ENCODE measurements at regions of chr14 and their contacts with region 1.

Region 1: GRCh38 chr14:71050204-71050823 is 143.1 kb downstream of the PCNX1 start:
- DNase-seq: no peak
- ATAC-seq: no peak
- H3K4me3 ChIP-seq: no peak overlapping the region
- H3K4me3 Mint-ChIP-seq: no peak overlapping the region
- H3K27ac ChIP-seq: no peak overlapping the region
- H3K27ac Mint-ChIP-seq: no peak overlapping the region
- H3K4me1 ChIP-seq: no peaks in the 10 kb centered on the region
- H3K4me1 Mint-ChIP-seq: peaks cover 2% of the 10 kb centered on the region
- H3K27me3 ChIP-seq: no peaks in the 10 kb centered on the region
- H3K27me3 Mint-ChIP-seq: no peaks in the 10 kb centered on the region
- CTCF ChIP-seq: peak; percentile 78

Region 2: GRCh38 chr14:71089971-71090370 is 39.7 kb after region 1 on chr14:
- CTCF ChIA-PET with region 1: no interaction called
- POLR2A ChIA-PET with region 1: no interaction called
- intact Hi-C with region 1: loop called (anchors 1 kb)
- DNase-seq: no peak
- ATAC-seq: no peak
- H3K4me3 ChIP-seq: no peak overlapping the region
- H3K4me3 Mint-ChIP-seq: no peak overlapping the region
- H3K27ac ChIP-seq: no peak overlapping the region
- H3K27ac Mint-ChIP-seq: no peak overlapping the region
- H3K4me1 ChIP-seq: no peaks in the 10 kb centered on the region
- H3K4me1 Mint-ChIP-seq: no peaks in the 10 kb centered on the region
- H3K27me3 ChIP-seq: no peaks in the 10 kb centered on the region
- H3K27me3 Mint-ChIP-seq: no peaks in the 10 kb centered on the region
- CTCF ChIP-seq: no peak

Region 3: GRCh38 chr14:71242237-71242748 is 192.0 kb after region 1 on chr14:
- CTCF ChIA-PET with region 1: no interaction called
- POLR2A ChIA-PET with region 1: no interaction called
- intact Hi-C with region 1: no loop called
- DNase-seq: no peak
- ATAC-seq: no peak
- H3K4me3 ChIP-seq: no peak overlapping the region
- H3K4me3 Mint-ChIP-seq: no peak overlapping the region
- H3K27ac ChIP-seq: no peak overlapping the region
- H3K27ac Mint-ChIP-seq: no peak overlapping the region
- H3K4me1 ChIP-seq: peaks cover 13 to 20% of the 10 kb centered on the region in 2 donors
- H3K4me1 Mint-ChIP-seq: peaks cover 23% of the 10 kb centered on the region
- H3K27me3 ChIP-seq: peaks cover 0 to 4% (median 0%) of the 10 kb centered on the region in 4 experiments
- H3K27me3 Mint-ChIP-seq: peaks cover 5% of the 10 kb centered on the region
- CTCF ChIP-seq: no peak

Region 4: GRCh38 chr14:71415404-71415690 is 365.0 kb after region 1 on chr14:
- CTCF ChIA-PET with region 1: no interaction called
- POLR2A ChIA-PET with region 1: no interaction called
- intact Hi-C with region 1: no loop called
- DNase-seq: no peak
- ATAC-seq: no peak
- H3K4me3 ChIP-seq: no peak overlapping the region
- H3K4me3 Mint-ChIP-seq: no peak overlapping the region
- H3K27ac ChIP-seq: no peak overlapping the region
- H3K27ac Mint-ChIP-seq: no peak overlapping the region
- H3K4me1 ChIP-seq: no peaks in the 10 kb centered on the region
- H3K4me1 Mint-ChIP-seq: peaks cover 35% of the 10 kb centered on the region
- H3K27me3 ChIP-seq: no peaks in the 10 kb centered on the region
- H3K27me3 Mint-ChIP-seq: no peaks in the 10 kb centered on the region
- CTCF ChIP-seq: no peak